Gastrocnemius medialis (tissue), 4 donors: ENCODE measurements at regions of chr22 and their contacts with region 1.

Region 1: GRCh38 chr22:35893698-35894097 is 134.9 kb downstream of the RBFOX2 start:
- DNase-seq: no peak
- ATAC-seq: peak in 1 of 2 donors; percentile 20
- H3K4me3 ChIP-seq: peak overlapping the region; percentile 32 to 55 (median 52)
- H3K27ac ChIP-seq: peak overlapping the region in 3 of 4 donors; percentile 79 to 88 (median 86)
- H3K4me1 ChIP-seq: peaks cover 54 to 72% of the 10 kb centered on the region in 2 donors
- H3K27me3 ChIP-seq: no peaks in the 10 kb centered on the region
- CTCF ChIP-seq: no peak
- POLR2A ChIP-seq: no peak

Region 2: GRCh38 chr22:35350539-35351503 is 542.9 kb before region 1 on chr22:
- in situ Hi-C with region 1: no loop called
- intact Hi-C with region 1: no loop called
- DNase-seq: peak; percentile 94 to 95
- ATAC-seq: peak; percentile 84 to 86
- H3K4me3 ChIP-seq: peak overlapping the region; percentile 53 to 75 (median 61)
- H3K27ac ChIP-seq: peak overlapping the region; percentile 83 to 91 (median 86)
- H3K4me1 ChIP-seq: peaks cover 16 to 24% of the 10 kb centered on the region in 2 donors
- H3K27me3 ChIP-seq: no peaks in the 10 kb centered on the region
- CTCF ChIP-seq: peak; percentile 93 to 97 (median 95)
- POLR2A ChIP-seq: peak; percentile 68 to 75

Region 3: GRCh38 chr22:35749808-35750207 is 143.9 kb before region 1 on chr22:
- in situ Hi-C with region 1: no loop called
- intact Hi-C with region 1: no loop called
- DNase-seq: no peak
- ATAC-seq: no peak
- H3K4me3 ChIP-seq: no peak overlapping the region
- H3K27ac ChIP-seq: peak overlapping the region in 3 of 4 donors; percentile 47 to 86 (median 65)
- H3K4me1 ChIP-seq: peaks cover 36 to 46% of the 10 kb centered on the region in 2 donors
- H3K27me3 ChIP-seq: no peaks in the 10 kb centered on the region
- CTCF ChIP-seq: no peak
- POLR2A ChIP-seq: no peak

Region 4: GRCh38 chr22:35846804-35847203 is 46.9 kb before region 1 on chr22:
- in situ Hi-C with region 1: no loop called
- intact Hi-C with region 1: loop called (anchors 1 kb)
- DNase-seq: no peak
- ATAC-seq: no peak
- H3K4me3 ChIP-seq: peak overlapping the region in 3 of 4 donors; percentile 26 to 52 (median 47)
- H3K27ac ChIP-seq: peak overlapping the region; percentile 82 to 95 (median 92)
- H3K4me1 ChIP-seq: peaks cover 57 to 58% of the 10 kb centered on the region in 2 donors
- H3K27me3 ChIP-seq: no peaks in the 10 kb centered on the region
- CTCF ChIP-seq: no peak
- POLR2A ChIP-seq: no peak

Region 5: GRCh38 chr22:36528795-36529751 is 635.4 kb after region 1 on chr22 and contains the start of gene EIF3D:
- in situ Hi-C with region 1: no loop called
- intact Hi-C with region 1: no loop called
- DNase-seq: peak; percentile 98 to 99
- ATAC-seq: peak; percentile 97 to 98
- H3K4me3 ChIP-seq: peak within 1 kb of the TSS; percentile 73 to 91 (median 80)
- H3K27ac ChIP-seq: peak within 1 kb of the TSS; percentile 88 to 97 (median 94)
- H3K4me1 ChIP-seq: peaks cover 11 to 12% of the 10 kb centered on the region in 2 donors
- H3K27me3 ChIP-seq: no peaks in the 10 kb centered on the region
- CTCF ChIP-seq: peak in 1 of 5 experiments; percentile 2
- POLR2A ChIP-seq: peak; percentile 65 to 84
- total RNA-seq, gene EIF3D: 208 to 319 (median 290) TPM